GM13977 (cell line): ENCODE measurements at regions of chr5 and their contacts with region 1.

Region 1: GRCh38 chr5:150449517-150450339 is at the start of gene RPS14:
- DNase-seq: peak; percentile 93
- CTCF ChIP-seq: peak; percentile 96

Region 2: DNA sequence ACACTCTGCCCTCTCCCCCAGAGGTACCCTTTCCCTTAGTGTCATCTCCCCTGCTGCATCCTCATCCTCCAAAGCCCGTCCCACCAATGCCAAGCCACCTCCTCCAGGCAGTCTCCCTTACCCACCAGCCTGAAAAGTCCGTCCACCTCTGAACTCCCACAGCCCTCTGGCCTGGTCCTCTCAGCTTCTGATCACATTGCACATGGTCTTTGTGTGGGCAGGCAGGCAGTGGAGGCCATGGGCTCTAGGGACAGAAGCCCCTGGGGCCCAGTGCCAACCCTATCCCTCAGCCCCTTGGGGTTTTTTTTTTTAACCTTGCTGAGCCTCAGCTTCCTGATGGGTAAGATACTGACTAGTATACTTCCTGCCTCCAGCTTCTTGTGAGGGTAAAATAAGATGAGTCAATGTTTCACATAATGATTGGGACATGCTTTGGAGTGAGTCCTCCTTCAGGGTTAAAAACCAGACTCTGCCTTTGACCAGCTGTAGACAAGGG is 382.8 kb before region 1 on chr5:
- in situ Hi-C with region 1: no loop called
- DNase-seq: no peak
- CTCF ChIP-seq: no peak

Region 3: GRCh38 chr5:150544611-150545219 is 95.0 kb after region 1 on chr5:
- in situ Hi-C with region 1: loop called (anchors 10 kb)
- DNase-seq: peak; percentile 93
- CTCF ChIP-seq: peak; percentile 96

Region 4: DNA sequence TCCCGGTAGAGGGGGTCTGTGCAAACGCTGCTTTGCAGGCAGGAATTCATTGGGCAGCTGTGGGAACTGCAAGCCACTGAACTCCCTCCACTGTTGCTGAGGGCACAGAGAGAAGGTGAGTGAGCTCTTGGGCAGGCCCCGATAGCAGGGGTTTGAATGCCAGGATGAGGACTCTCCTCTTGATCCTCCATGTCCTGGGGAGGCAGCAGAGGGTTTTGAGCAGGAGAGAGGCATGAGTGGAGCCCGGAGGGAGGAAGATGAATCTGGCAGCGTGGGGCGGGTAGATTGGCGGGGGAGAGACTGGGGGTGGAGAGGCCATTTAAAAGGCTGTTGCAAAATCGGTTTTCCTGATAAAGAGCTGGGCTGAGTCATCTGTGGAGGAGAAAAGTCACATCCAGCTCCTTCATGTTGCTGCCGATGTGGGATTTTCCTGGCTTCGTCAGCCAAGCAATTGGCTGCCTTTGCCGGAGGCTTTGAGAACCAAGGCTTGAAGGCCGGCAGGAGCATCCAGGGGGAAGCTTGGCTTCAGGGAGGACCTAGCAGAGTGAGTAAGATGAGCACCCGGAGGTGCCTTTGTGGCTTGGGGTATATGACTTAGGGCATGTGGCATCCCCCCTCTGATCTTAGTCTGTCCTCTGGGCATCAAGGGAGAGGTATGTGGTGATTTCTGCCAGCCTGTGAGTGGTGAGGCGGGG is 190.7 kb after region 1 on chr5 and contains the start of gene SYNPO:
- in situ Hi-C with region 1: no loop called
- DNase-seq: no peak
- CTCF ChIP-seq: no peak

Region 5: GRCh38 chr5:150665044-150665443 is 215.3 kb after region 1 on chr5:
- in situ Hi-C with region 1: loop called (anchors 10 kb)
- DNase-seq: no peak
- CTCF ChIP-seq: no peak